ENCODE measurements at regions of chr11 and their contacts with region 1.

Region 1: GRCh38 chr11:95849087-95849825 is 59.0 kb downstream of the CEP57 start:
- DNase-seq: peak; percentile 88
- ATAC-seq: peak; percentile 86
- H3K4me3 ChIP-seq: peak overlapping the region; percentile 26; the same call in 1 of the 2 replicates
- H3K27ac ChIP-seq: peak overlapping the region; percentile 77
- H3K4me1 ChIP-seq: peaks cover 30% of the 10 kb centered on the region
- H3K27me3 ChIP-seq: no peaks in the 10 kb centered on the region
- CTCF ChIP-seq: peak; percentile 92

Region 2: DNA sequence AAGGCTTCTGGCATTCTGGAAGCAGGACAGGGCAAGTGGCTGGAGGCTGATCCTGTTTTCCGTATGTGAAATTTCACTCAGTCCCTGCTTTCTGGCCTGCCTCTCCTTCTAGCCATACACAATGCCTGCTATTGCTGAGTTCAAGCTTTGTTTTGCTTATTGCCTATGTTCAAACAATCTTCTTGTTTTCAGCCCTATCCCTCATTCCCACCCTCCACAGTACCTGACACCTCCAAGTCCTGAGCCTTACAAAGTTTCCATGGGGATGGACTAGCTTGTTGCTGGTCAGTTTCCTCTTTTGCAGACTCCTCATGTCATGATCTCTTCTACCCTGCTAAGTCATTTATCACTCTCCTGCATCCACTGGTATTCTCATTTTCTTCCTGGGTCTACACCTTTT is 97.7 kb before region 1 on chr11:
- CTCF ChIA-PET with region 1: no interaction called
- POLR2A ChIA-PET with region 1: no interaction called
- intact Hi-C with region 1: no loop called
- DNase-seq: no peak
- ATAC-seq: no peak
- H3K4me3 ChIP-seq: no peak overlapping the region
- H3K27ac ChIP-seq: no peak overlapping the region
- H3K4me1 ChIP-seq: no peaks in the 10 kb centered on the region
- H3K27me3 ChIP-seq: peaks cover 91% of the 10 kb centered on the region
- CTCF ChIP-seq: no peak

Region 3: GRCh38 chr11:96228473-96228891 is 379.2 kb after region 1 on chr11:
- CTCF ChIA-PET with region 1: no interaction called
- POLR2A ChIA-PET with region 1: no interaction called
- intact Hi-C with region 1: loop called (anchors 10 kb)
- DNase-seq: peak; percentile 98
- ATAC-seq: peak; percentile 98
- H3K4me3 ChIP-seq: no peak overlapping the region
- H3K27ac ChIP-seq: peak overlapping the region; percentile 82
- H3K4me1 ChIP-seq: peaks cover 31% of the 10 kb centered on the region
- H3K27me3 ChIP-seq: no peaks in the 10 kb centered on the region
- CTCF ChIP-seq: no peak